Calu3 (cell line): ENCODE measurements at regions of chr9 and their contacts with region 1.

Region 1: DNA sequence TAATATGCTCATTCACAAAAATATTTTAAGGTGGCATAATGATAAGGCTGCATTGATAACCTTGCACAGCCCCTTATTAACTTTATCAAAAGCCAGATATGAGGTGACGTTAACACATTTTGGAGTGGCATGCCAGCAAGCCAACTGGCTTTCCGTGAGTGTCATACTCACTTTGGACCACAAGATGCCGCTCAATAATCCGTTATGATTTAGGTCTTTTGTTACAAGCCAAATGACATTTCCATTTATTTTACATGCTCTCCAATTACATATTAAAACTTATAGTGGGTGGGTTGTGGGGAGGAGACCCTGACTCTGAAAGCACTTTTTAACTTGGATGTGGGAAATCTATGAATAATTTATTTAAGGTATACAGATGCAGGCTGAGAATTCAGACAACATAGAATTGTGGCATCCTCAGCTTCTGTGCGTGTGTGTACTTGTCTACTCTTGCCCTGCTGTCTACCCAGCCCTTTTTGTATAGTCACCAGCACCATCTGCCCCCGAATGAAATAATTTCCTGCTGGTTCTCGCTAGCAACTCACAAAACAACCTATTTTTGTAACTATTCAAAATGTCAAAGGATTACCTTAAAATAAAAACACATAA is 305.1 kb downstream of the PSAT1 start:
- DNase-seq: peak; percentile 32
- H3K4me3 Mint-ChIP-seq: no peak overlapping the region
- H3K27ac Mint-ChIP-seq: no peak overlapping the region
- H3K4me1 Mint-ChIP-seq: no peaks in the 10 kb centered on the region
- H3K27me3 Mint-ChIP-seq: peaks cover 56% of the 10 kb centered on the region
- CTCF ChIP-seq: peak; percentile 50

Region 2: GRCh38 chr9:78439190-78439865 is 162.7 kb before region 1 on chr9:
- CTCF ChIA-PET with region 1: no interaction called
- intact Hi-C with region 1: loop called (anchors 10 kb)
- DNase-seq: peak; percentile 68
- H3K4me3 Mint-ChIP-seq: no peak overlapping the region
- H3K27ac Mint-ChIP-seq: no peak overlapping the region
- H3K4me1 Mint-ChIP-seq: no peaks in the 10 kb centered on the region
- H3K27me3 Mint-ChIP-seq: peaks cover 69% of the 10 kb centered on the region
- CTCF ChIP-seq: peak; percentile 68

Region 3: DNA sequence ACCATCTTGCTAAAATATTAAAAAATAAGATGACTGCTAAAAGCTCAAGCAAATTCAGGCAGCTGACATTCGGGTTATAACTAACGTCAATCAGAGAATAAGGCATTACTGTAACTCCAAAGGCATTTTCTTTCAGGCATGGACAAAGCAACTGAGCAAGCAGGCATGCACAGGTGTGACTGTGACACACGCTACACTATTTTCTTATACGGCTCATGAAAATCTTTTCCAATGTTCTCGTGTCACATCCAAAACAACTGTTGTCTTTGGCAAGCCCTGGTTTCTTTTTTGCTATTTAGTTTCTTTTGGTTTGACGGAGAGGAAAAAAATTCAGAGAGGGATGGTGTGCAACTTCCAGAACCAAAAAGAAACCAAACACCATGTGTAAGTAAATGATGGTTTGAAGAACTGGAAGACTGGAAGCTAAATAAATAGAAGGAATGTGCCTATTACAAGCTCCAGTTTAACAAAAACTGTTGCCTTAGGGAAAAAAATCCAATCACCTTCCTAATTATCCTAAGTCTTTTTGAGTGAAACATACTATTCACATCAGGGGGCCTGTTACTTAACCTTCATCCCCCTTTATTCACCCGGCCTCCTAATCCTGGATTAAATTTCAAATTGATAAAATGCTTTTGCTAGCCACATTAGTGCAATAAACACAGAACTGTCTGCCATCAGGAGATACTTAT is 27.6 kb before region 1 on chr9:
- CTCF ChIA-PET with region 1: no interaction called
- intact Hi-C with region 1: no loop called
- DNase-seq: no peak
- H3K4me3 Mint-ChIP-seq: no peak overlapping the region
- H3K27ac Mint-ChIP-seq: no peak overlapping the region
- H3K4me1 Mint-ChIP-seq: no peaks in the 10 kb centered on the region
- H3K27me3 Mint-ChIP-seq: peaks cover 20% of the 10 kb centered on the region
- CTCF ChIP-seq: no peak

Region 4: DNA sequence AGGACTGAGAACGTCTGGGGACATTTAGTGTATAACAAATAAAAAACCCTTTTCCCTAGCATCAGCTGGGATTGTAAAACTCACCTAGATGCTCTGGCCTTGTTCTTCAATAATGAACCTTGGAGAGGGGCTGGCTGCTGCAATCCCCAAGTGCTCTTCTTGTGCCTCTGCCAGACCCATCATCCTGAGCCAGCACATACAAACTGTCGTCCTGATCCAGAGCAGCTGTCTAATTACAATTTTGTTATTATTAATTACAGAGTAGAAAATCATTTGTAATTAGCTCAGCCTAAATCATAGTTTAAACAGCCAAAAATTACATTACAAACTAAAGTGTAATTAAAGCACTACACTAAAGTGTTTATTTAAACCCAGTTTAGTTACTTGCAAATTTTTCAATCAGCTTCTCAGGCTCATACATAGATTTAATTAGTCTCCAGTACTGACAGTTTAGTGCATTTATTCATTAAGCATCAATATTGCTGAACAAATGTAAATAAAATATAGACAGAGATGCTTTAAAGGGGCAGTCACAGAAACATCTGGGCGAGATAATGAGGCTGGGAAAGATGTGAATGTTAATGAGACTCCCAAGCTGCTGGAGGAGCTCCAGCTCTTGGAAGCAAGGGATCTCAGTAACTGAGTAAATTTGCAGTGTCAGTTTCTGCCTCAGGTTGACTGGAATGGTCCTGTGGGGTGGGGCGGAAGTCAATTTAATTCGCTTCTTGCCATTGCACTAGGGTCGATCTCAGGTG is 337.4 kb after region 1 on chr9:
- CTCF ChIA-PET with region 1: no interaction called
- intact Hi-C with region 1: no loop called
- DNase-seq: no peak
- H3K4me3 Mint-ChIP-seq: no peak overlapping the region
- H3K27ac Mint-ChIP-seq: no peak overlapping the region
- H3K4me1 Mint-ChIP-seq: no peaks in the 10 kb centered on the region
- H3K27me3 Mint-ChIP-seq: no peaks in the 10 kb centered on the region
- CTCF ChIP-seq: no peak

Region 5: GRCh38 chr9:79046401-79046800 is 444.3 kb after region 1 on chr9:
- CTCF ChIA-PET with region 1: no interaction called
- intact Hi-C with region 1: no loop called
- DNase-seq: no peak
- H3K4me3 Mint-ChIP-seq: no peak overlapping the region
- H3K27ac Mint-ChIP-seq: no peak overlapping the region
- H3K4me1 Mint-ChIP-seq: no peaks in the 10 kb centered on the region
- H3K27me3 Mint-ChIP-seq: no peaks in the 10 kb centered on the region
- CTCF ChIP-seq: no peak

Region 6: GRCh38 chr9:79571309-79572031 is 969.4 kb after region 1 on chr9 and contains the start of gene TLE4:
- CTCF ChIA-PET with region 1: no interaction called
- intact Hi-C with region 1: loop called (anchors 2 kb)
- DNase-seq: peak; percentile 93
- H3K4me3 Mint-ChIP-seq: no peak within 1 kb of the TSS
- H3K27ac Mint-ChIP-seq: no peak within 1 kb of the TSS
- H3K4me1 Mint-ChIP-seq: no peaks in the 10 kb centered on the region
- H3K27me3 Mint-ChIP-seq: peaks cover 26% of the 10 kb centered on the region
- CTCF ChIP-seq: no peak
- total RNA-seq, gene TLE4: 0.97 and 2.3 TPM in 2 replicates